ENCODE measurements at regions of chr20 and their contacts with region 1.

Region 1: DNA sequence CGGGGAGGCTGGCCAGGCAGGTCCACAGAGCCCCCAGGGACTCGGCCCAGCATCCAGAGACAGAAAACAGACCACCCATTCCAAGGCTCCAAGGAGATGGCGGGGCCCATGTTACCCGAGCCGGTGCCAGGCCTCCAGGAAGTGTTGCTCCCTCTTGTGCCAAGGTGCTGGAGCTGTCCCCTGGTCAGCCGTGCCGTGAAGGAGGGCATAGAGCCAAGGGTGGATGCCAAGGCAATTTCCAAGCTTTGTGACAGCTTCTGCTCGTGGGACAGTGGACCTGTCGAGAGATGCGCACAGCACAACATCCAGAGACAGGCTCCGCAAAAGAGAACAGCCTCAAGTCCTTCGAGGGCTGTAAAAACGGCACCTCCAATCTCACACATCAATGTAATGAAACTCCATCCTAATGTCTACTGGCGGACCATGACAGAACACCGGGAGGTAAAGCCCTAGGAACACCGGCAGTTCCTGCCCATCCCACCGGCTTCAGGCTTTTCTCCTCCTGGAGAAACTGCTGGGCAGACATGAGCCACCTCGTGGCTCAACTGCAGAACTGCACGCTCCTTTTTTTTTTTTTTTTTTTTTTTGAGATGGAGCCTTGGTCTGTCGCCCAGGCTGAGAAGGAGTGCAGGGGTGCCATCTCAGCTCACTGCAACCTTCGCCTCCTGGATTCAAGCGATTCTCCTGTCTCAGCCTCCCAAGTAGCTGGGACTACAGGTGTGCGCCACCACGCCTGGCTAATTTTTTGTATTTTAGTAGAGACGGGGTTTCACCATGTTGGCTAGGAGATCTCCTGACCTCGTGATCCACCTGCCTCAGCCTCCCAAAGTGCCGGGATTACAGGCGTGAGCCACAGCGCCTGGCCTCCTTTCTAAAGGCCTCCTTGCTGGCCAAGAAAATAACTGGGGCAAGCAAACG is 30.9 kb upstream of the AVP start:
- DNase-seq: peak in 1 of 2 donors; percentile 17
- ATAC-seq: peak; percentile 73

Region 2: GRCh38 chr20:2340136-2340535 is 775.3 kb before region 1 on chr20:
- intact Hi-C with region 1: no loop called
- DNase-seq: no peak
- ATAC-seq: no peak

Region 3: GRCh38 chr20:3051385-3052019 is 63.9 kb before region 1 on chr20:
- intact Hi-C with region 1: loop called in 1 of 2 experiments (anchors 5 kb)
- DNase-seq: no peak
- ATAC-seq: no peak

Measured in left colon (tissue), 2 donors.